Motor neuron (in vitro differentiated cells): ENCODE measurements at regions of chr22 and their contacts with region 1.

Region 1: GRCh38 chr22:20016734-20017621 is at the start of gene ARVCF:
- ATAC-seq: peak; percentile 54 to 73 (median 63)
- H3K4me3 ChIP-seq: peak within 1 kb of the TSS; percentile 54 to 78 (median 64)
- H3K27ac ChIP-seq: no peak within 1 kb of the TSS
- H3K4me1 ChIP-seq: peaks cover 19 to 26% of the 10 kb centered on the region in 2 donors
- total RNA-seq, gene ARVCF: 9.5 to 49.9 (median 39.2) TPM

Region 2: DNA sequence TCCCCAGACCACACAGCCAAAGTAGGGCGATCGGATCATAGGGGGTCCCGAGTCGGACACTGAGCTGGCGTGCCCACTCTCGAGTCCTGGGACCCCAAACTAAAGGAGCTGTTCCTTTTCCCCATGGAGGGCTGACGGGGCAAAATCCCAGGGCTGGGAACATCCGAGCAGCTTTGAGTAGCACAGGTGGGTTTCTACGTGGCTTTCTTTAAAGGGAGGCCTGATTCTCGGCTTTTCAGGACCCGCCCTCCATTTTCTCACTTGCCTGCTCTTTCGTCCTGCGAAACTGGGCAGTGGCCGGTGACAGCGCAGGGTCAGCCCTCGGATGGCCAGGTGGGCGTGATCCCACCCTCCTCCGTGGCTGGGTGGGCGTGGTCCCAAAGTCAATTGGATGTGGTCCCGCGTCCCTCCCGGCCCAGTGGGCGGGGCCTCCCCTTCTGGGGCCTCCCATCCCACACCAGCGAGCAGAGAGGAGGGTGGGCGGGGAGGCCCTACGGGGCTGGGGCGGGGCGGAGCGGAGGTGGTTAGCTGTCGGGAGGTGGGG is 57.9 kb before region 1 on chr22:
- in situ Hi-C with region 1: loop called in 1 of 9 experiments (anchors 10 kb)
- ATAC-seq: peak; percentile 36 to 86 (median 83)
- H3K4me3 ChIP-seq: peak overlapping the region; percentile 11 to 36 (median 21)
- H3K27ac ChIP-seq: peak overlapping the region; percentile 76 to 79
- H3K4me1 ChIP-seq: peaks cover 40 to 42% of the 10 kb centered on the region in 2 donors